ENCODE measurements at regions of chr6 and their contacts with region 1.

Region 1: DNA sequence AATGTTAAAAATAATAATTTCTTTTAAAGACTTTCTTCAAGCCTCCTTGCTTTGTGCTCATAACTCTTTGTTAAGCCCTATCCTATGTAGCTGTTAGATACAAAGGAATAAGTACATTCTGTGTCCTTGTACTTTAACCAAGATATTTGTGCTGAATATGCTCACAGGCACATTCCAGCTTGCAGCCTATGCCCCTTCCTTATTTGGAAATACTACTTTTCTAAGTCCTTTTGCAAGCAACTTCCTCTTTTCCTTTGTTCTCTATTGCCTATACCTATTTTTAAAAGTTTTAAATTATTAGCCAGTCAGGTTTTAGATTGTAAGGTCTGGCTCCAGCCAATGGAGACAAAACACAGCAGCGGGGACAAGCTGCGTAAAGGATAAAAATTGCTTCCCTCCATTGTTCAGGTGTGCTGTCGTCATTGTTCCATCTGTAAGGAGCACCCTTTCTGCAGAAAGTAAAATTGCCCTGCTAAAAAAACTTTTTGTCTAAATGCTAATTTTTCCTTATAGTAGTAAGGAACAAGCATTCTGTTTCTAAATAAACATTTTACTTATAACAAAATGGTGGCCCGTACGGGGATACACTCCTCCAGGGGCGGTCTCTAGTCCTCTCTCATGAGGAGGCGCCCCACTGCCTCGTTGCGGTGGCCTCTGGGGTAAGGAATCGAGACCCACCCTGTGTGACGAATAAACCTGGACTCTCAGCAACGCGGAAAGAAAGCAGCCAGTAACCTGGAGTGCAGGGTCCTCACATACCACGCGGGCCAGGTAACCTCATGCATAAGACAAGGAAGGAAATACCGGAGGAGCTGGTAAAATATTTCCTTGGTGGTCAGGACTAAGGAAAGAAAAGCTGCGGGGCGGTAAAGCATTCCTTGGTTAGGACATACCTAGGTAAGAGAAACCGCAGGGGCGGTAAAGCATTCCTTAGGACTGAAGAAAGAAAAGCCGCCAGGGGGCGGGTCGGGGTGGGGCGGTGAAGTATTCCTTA is 80.4 kb downstream of the SYTL3 start:
- DNase-seq: peak in 1 of 2 experiments; percentile 82
- H3K4me3 ChIP-seq: peak overlapping the region in 3 of 4 experiments; percentile 12 to 58 (median 15); a peak in 5 of 8 replicates
- H3K27ac ChIP-seq: peak overlapping the region; percentile 90
- H3K4me1 ChIP-seq: no peaks in the 10 kb centered on the region
- H3K27me3 ChIP-seq: no peaks in the 10 kb centered on the region
- CTCF ChIP-seq: peak in 2 of 3 experiments; percentile 19 to 22; a peak in 1 of 4 replicates
- EP300 ChIP-seq: peak in 1 of 2 experiments; percentile 85; a peak in 1 of 3 replicates
- POLR2A ChIP-seq: peak; percentile 50 to 55
- RAD21 ChIP-seq: peak; percentile 3 to 34; a peak in 2 of 4 replicates

Region 2: DNA sequence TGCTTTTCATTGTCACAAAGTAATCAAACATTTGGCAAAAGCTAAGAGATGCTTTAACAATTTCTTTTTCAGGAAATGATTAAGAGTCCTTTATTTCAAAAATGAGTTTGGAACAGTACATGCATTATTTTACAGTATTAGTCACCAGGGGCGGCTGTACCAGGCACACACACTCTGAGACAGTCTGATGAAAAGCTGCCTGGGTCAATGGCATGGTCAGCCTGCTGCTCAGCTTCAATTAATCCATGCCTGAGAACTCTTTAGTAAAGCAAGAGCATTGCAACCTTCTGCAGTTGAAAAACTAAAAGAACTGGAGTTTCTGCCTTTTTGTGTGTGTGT is 312.5 kb before region 1 on chr6:
- CTCF ChIA-PET with region 1: no interaction called
- POLR2A ChIA-PET with region 1: no interaction called
- DNase-seq: no peak
- H3K4me3 ChIP-seq: no peak overlapping the region
- H3K27ac ChIP-seq: no peak overlapping the region
- H3K4me1 ChIP-seq: no peaks in the 10 kb centered on the region
- H3K27me3 ChIP-seq: no peaks in the 10 kb centered on the region
- CTCF ChIP-seq: no peak
- EP300 ChIP-seq: no peak
- POLR2A ChIP-seq: no peak
- RAD21 ChIP-seq: no peak

Region 3: GRCh38 chr6:158660333-158660754 is 69.9 kb before region 1 on chr6:
- CTCF ChIA-PET with region 1: no interaction called
- POLR2A ChIA-PET with region 1: no interaction called
- DNase-seq: peak in 1 of 2 experiments; percentile 61
- H3K4me3 ChIP-seq: no peak overlapping the region
- H3K27ac ChIP-seq: no peak overlapping the region
- H3K4me1 ChIP-seq: peaks cover 0 to 8% (median 4%) of the 10 kb centered on the region in 4 experiments; a peak in 4 of 7 replicates
- H3K27me3 ChIP-seq: no peaks in the 10 kb centered on the region; a peak in 1 of 7 replicates
- CTCF ChIP-seq: peak; percentile 52 to 69 (median 67)
- EP300 ChIP-seq: no peak
- POLR2A ChIP-seq: no peak
- RAD21 ChIP-seq: peak; percentile 61 to 70

Region 4: GRCh38 chr6:158744986-158745430 is 14.8 kb after region 1 on chr6:
- CTCF ChIA-PET with region 1: interaction called, 13 read pairs
- POLR2A ChIA-PET with region 1: interaction called, 9 read pairs
- DNase-seq: no peak
- H3K4me3 ChIP-seq: no peak overlapping the region
- H3K27ac ChIP-seq: no peak overlapping the region
- H3K4me1 ChIP-seq: no peaks in the 10 kb centered on the region
- H3K27me3 ChIP-seq: no peaks in the 10 kb centered on the region
- CTCF ChIP-seq: no peak
- EP300 ChIP-seq: no peak
- POLR2A ChIP-seq: no peak
- RAD21 ChIP-seq: no peak

Region 5: GRCh38 chr6:158758451-158758861 is 28.2 kb after region 1 on chr6:
- CTCF ChIA-PET with region 1: interaction called, 7 read pairs
- POLR2A ChIA-PET with region 1: interaction called, 39 read pairs
- DNase-seq: peak; percentile 34 to 71
- H3K4me3 ChIP-seq: no peak overlapping the region
- H3K27ac ChIP-seq: no peak overlapping the region
- H3K4me1 ChIP-seq: peaks cover 0 to 20% (median 10%) of the 10 kb centered on the region in 4 experiments; a peak in 6 of 7 replicates
- H3K27me3 ChIP-seq: no peaks in the 10 kb centered on the region
- CTCF ChIP-seq: no peak
- EP300 ChIP-seq: no peak
- POLR2A ChIP-seq: no peak
- RAD21 ChIP-seq: no peak